ENCODE measurements at regions of chr19 and their contacts with region 1.

Region 1: GRCh38 chr19:3075895-3076431 is 13.7 kb upstream of the TLE5 start:
- DNase-seq: peak in 5 of 7 donors; percentile 45 to 74 (median 66)
- H3K4me3 ChIP-seq: no peak overlapping the region
- H3K27ac ChIP-seq: no peak overlapping the region
- H3K4me1 ChIP-seq: no peaks in the 10 kb centered on the region
- H3K27me3 ChIP-seq: no peaks in the 10 kb centered on the region
- CTCF ChIP-seq: peak; percentile 82 to 93 (median 91)
- POLR2A ChIP-seq: no peak

Region 2: GRCh38 chr19:2950286-2951124 is 125.5 kb before region 1 on chr19:
- intact Hi-C with region 1: loop called (anchors 10 kb)
- DNase-seq: peak; percentile 100
- H3K4me3 ChIP-seq: peak overlapping the region; percentile 52 to 93 (median 81)
- H3K27ac ChIP-seq: peak overlapping the region; percentile 90 to 97 (median 96)
- H3K4me1 ChIP-seq: peaks cover 12 to 13% of the 10 kb centered on the region in 2 donors
- H3K27me3 ChIP-seq: no peaks in the 10 kb centered on the region
- CTCF ChIP-seq: no peak
- POLR2A ChIP-seq: peak; percentile 80 to 91

Region 3: DNA sequence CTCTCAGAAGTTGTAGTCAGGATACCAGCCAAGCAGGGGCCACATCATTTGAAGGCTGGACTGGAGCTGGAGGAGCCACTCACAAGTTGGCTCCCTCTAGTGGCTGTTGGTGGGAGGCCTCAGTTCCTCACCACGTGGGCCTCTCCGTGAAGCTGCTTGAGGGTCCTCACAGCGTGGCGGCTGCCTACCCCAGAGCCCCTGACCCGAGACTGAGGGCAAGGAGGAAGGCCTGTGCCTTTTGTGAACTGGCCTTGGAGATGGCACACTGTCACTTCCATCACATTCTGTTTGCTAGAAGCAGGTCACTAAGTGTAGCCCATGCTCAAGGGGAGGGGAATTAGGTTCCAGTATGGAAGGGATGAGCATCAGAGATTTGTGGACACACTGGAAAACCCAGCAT is 32.8 kb after region 1 on chr19:
- intact Hi-C with region 1: no loop called
- DNase-seq: peak; percentile 56 to 81 (median 72)
- H3K4me3 ChIP-seq: no peak overlapping the region
- H3K27ac ChIP-seq: no peak overlapping the region
- H3K4me1 ChIP-seq: peaks cover 6 to 23% of the 10 kb centered on the region in 2 donors
- H3K27me3 ChIP-seq: no peaks in the 10 kb centered on the region
- CTCF ChIP-seq: peak; percentile 68 to 82 (median 76)
- POLR2A ChIP-seq: no peak

Region 4: GRCh38 chr19:3125900-3126524 is 50.0 kb after region 1 on chr19:
- intact Hi-C with region 1: loop called (anchors 5 to 10 kb)
- DNase-seq: peak; percentile 61 to 79 (median 71)
- H3K4me3 ChIP-seq: no peak overlapping the region
- H3K27ac ChIP-seq: no peak overlapping the region
- H3K4me1 ChIP-seq: peaks cover 0 to 8% of the 10 kb centered on the region in 2 donors
- H3K27me3 ChIP-seq: no peaks in the 10 kb centered on the region
- CTCF ChIP-seq: peak; percentile 65 to 82 (median 75)
- POLR2A ChIP-seq: no peak